Endothelial cell of umbilical vein (primary cell): ENCODE measurements at regions of chr2 and their contacts with region 1.

Region 1: DNA sequence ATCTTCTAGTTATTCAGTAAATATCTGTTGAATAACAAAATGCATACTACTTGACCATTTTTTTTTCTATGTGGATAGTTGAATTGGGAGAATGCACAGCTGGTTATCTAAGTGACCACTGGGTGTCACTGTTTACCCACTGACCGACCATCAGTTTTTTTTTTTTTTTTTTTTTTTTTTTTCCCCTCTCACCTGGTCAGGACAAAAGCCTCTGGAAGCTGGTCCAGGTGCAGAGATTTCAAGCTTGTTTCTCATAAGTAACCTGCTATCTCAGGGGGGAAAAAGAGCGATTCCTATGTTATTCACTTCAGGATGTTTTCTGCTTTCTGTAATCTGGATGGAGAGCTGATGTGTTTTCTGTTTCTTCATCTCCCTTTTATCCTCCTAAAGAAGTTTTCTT is 256.0 kb downstream of the DCDC2C start:
- DNase-seq: peak; percentile 29
- H3K4me3 ChIP-seq: no peak overlapping the region
- H3K27ac ChIP-seq: no peak overlapping the region
- H3K4me1 ChIP-seq: no peaks in the 10 kb centered on the region
- H3K27me3 ChIP-seq: no peaks in the 10 kb centered on the region
- CTCF ChIP-seq: peak; percentile 56 to 62
- POLR2A ChIP-seq: no peak

Region 2: GRCh38 chr2:3644246-3644525 is 315.2 kb before region 1 on chr2:
- CTCF ChIA-PET with region 1: no interaction called
- POLR2A ChIA-PET with region 1: no interaction called
- dilution Hi-C with region 1: no loop called
- intact Hi-C with region 1: no loop called
- DNase-seq: no peak
- H3K4me3 ChIP-seq: no peak overlapping the region
- H3K27ac ChIP-seq: no peak overlapping the region
- H3K4me1 ChIP-seq: no peaks in the 10 kb centered on the region
- H3K27me3 ChIP-seq: no peaks in the 10 kb centered on the region
- CTCF ChIP-seq: no peak
- POLR2A ChIP-seq: no peak

Region 3: DNA sequence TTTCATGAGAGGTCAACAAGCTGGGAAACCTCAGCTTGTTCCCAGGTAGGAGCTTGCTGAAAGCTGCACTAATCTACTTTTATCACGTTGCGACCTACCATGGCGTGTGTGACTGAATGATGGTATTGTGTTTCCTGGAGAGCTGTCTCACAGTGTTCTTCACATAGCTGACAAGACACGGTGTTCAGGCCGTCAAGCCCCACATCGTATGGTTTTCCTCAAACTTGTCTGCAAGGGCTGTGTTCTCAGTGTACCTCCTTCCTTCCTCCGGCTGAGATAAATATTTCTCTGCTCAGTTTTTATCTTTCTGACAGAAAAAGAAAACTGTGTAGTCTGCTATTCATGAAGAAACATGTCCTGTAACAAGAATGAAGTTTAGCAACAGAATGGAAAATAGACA is 11.2 kb before region 1 on chr2:
- CTCF ChIA-PET with region 1: interaction called, 11 read pairs
- POLR2A ChIA-PET with region 1: no interaction called
- dilution Hi-C with region 1: no loop called
- intact Hi-C with region 1: no loop called
- DNase-seq: no peak
- H3K4me3 ChIP-seq: no peak overlapping the region
- H3K27ac ChIP-seq: no peak overlapping the region
- H3K4me1 ChIP-seq: no peaks in the 10 kb centered on the region
- H3K27me3 ChIP-seq: no peaks in the 10 kb centered on the region
- CTCF ChIP-seq: no peak
- POLR2A ChIP-seq: no peak

Region 4: GRCh38 chr2:4047961-4048891 is 88.9 kb after region 1 on chr2:
- CTCF ChIA-PET with region 1: interaction called, 40 read pairs
- POLR2A ChIA-PET with region 1: no interaction called
- dilution Hi-C with region 1: no loop called
- intact Hi-C with region 1: no loop called
- DNase-seq: peak; percentile 77
- H3K4me3 ChIP-seq: no peak overlapping the region
- H3K27ac ChIP-seq: peak overlapping the region; percentile 76
- H3K4me1 ChIP-seq: peaks cover 19% of the 10 kb centered on the region
- H3K27me3 ChIP-seq: no peaks in the 10 kb centered on the region
- CTCF ChIP-seq: no peak
- POLR2A ChIP-seq: no peak

Region 5: GRCh38 chr2:4053769-4054493 is 94.6 kb after region 1 on chr2:
- CTCF ChIA-PET with region 1: interaction called, 40 read pairs
- POLR2A ChIA-PET with region 1: no interaction called
- dilution Hi-C with region 1: no loop called
- intact Hi-C with region 1: loop called (anchors 1 kb)
- DNase-seq: peak; percentile 13
- H3K4me3 ChIP-seq: no peak overlapping the region
- H3K27ac ChIP-seq: no peak overlapping the region
- H3K4me1 ChIP-seq: peaks cover 3% of the 10 kb centered on the region
- H3K27me3 ChIP-seq: no peaks in the 10 kb centered on the region
- CTCF ChIP-seq: no peak
- POLR2A ChIP-seq: no peak

Region 6: GRCh38 chr2:4762951-4763376 is 803.6 kb after region 1 on chr2:
- CTCF ChIA-PET with region 1: interaction called, 63 read pairs
- POLR2A ChIA-PET with region 1: no interaction called
- dilution Hi-C with region 1: no loop called
- intact Hi-C with region 1: loop called (anchors 1 kb)
- DNase-seq: peak; percentile 58
- H3K4me3 ChIP-seq: no peak overlapping the region
- H3K27ac ChIP-seq: no peak overlapping the region
- H3K4me1 ChIP-seq: no peaks in the 10 kb centered on the region
- H3K27me3 ChIP-seq: no peaks in the 10 kb centered on the region
- CTCF ChIP-seq: peak; percentile 56
- POLR2A ChIP-seq: no peak

Region 7: GRCh38 chr2:5365871-5366461 is 1406.6 kb after region 1 on chr2:
- CTCF ChIA-PET with region 1: interaction called, 15 read pairs
- POLR2A ChIA-PET with region 1: no interaction called
- dilution Hi-C with region 1: no loop called
- intact Hi-C with region 1: no loop called
- DNase-seq: peak; percentile 7
- H3K4me3 ChIP-seq: no peak overlapping the region
- H3K27ac ChIP-seq: no peak overlapping the region
- H3K4me1 ChIP-seq: no peaks in the 10 kb centered on the region
- H3K27me3 ChIP-seq: no peaks in the 10 kb centered on the region
- CTCF ChIP-seq: peak; percentile 39 to 59
- POLR2A ChIP-seq: no peak